CD4-positive, alpha-beta memory T cell (primary cell): ENCODE measurements at regions of chr7 and their contacts with region 1.

Region 1: DNA sequence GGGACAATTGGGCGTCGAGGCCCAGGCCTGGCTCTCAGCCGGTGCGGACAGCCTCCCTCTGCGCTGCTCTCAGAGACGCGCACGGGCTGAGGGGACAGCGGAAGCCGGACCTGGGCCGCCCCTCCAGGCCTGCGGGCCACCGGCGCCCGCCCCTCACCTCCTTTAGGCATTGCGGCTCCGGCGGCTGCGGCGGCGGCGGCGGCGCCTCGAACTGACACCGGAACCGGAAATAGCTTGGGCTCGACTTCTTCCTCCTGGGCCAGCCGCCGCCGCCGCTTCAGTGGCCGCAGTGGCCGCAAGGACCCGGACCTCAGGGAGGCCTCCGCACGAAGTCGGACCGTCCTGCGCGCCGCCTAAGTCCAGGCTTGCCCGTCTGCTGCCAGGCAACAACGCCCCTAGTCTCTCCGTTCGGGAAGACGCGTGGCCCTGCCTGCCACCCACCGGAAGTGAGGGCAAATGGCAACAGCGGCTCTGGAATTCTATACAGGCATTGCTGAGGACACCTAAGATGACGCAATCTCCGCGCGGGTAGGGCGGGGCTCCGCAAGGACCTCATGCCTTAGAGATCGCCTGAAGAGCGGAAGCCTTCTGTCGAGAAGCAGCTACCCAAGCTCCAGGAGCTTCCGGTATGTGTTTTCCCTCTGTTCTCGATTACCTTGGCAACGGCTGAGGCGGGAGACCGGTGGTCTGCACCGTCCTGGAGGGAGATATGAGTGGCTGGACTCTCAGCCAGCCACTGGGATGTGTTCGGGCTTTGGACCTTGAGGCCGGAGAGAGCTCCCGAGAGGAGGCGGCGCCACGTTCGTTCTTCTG is at the starts of genes BUD31 and PDAP1:
- DNase-seq: peak; percentile 96 to 100 (median 98)
- H3K4me3 ChIP-seq: peak within 1 kb of the TSS; percentile 94 to 97
- H3K4me3 Mint-ChIP-seq: peak within 1 kb of the TSS; percentile 94 to 99 (median 96)
- H3K27ac ChIP-seq: peak within 1 kb of the TSS; percentile 93
- H3K27ac Mint-ChIP-seq: peak within 1 kb of the TSS; percentile 88 to 100 (median 98)
- H3K4me1 ChIP-seq: peaks cover 45% of the 10 kb centered on the region
- H3K4me1 Mint-ChIP-seq: peaks cover 29 to 61% (median 48%) of the 10 kb centered on the region in 4 donors
- H3K27me3 ChIP-seq: no peaks in the 10 kb centered on the region
- H3K27me3 Mint-ChIP-seq: no peaks in the 10 kb centered on the region
- total RNA-seq, gene BUD31: 60.0 to 61.3 TPM
- total RNA-seq, gene PDAP1: 66.0 to 67.0 TPM

Region 2: DNA sequence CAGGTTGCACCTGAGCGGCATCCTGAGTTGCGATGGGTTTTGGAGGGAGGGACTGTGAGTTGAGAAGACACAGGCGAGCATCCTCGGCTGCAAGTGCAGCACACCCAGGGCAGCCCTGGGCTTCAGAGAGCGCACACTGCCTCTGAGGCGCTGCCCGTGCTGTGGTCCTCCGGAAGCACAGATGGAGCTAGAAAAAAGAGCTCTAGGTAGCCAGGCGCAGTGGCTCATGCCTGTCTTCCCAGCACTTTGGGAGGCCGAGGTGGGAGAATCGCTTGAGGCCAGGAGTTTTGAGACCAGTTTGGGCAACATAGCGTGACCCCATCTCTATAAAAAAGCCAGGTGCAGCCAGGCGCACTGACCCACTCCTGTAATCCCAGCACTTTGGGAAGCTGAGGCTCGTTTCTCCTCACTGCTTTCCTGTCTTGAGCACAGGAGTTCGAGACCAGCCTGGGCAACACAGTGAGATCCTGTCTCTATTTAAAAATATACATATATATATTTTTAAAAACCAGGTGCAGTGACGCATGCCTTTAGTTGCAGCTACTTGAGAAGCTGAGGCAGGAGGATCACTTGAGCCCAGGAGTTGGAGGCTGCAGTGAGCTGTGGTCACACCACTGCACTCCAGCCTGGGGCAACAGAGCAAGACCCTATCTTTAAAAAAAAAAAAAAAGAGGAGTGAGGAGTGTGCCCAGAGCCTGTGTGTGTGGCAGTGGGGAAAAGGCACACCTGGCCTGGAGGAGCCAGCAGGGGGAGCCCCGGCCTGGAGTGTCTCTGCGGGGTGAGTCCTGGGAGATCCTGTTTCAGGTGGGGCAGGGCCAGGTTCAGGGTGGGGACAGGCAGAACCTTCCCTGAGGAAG is 43.4 kb before region 1 on chr7:
- CTCF ChIA-PET with region 1: interaction called, 38 read pairs
- POLR2A ChIA-PET with region 1: interaction called, 6 read pairs
- intact Hi-C with region 1: loop called (anchors 1 kb)
- DNase-seq: peak; percentile 62 to 70 (median 66)
- H3K4me3 ChIP-seq: no peak overlapping the region
- H3K4me3 Mint-ChIP-seq: no peak overlapping the region
- H3K27ac ChIP-seq: no peak overlapping the region
- H3K27ac Mint-ChIP-seq: peak overlapping the region in 4 of 7 donors; percentile 32 to 89 (median 50)
- H3K4me1 ChIP-seq: no peaks in the 10 kb centered on the region
- H3K4me1 Mint-ChIP-seq: no peaks in the 10 kb centered on the region
- H3K27me3 ChIP-seq: no peaks in the 10 kb centered on the region
- H3K27me3 Mint-ChIP-seq: no peaks in the 10 kb centered on the region

Region 3: GRCh38 chr7:99380032-99380822 is 28.4 kb before region 1 on chr7:
- CTCF ChIA-PET with region 1: interaction called, 6 read pairs
- POLR2A ChIA-PET with region 1: interaction called, 130 read pairs
- intact Hi-C with region 1: loop called (anchors 1 kb)
- DNase-seq: peak; percentile 23 to 62 (median 33)
- H3K4me3 ChIP-seq: peak overlapping the region; percentile 64 to 75
- H3K4me3 Mint-ChIP-seq: peak overlapping the region; percentile 69 to 93 (median 87)
- H3K27ac ChIP-seq: peak overlapping the region; percentile 93
- H3K27ac Mint-ChIP-seq: peak overlapping the region; percentile 93 to 99 (median 98)
- H3K4me1 ChIP-seq: peaks cover 90% of the 10 kb centered on the region
- H3K4me1 Mint-ChIP-seq: peaks cover 32 to 77% (median 55%) of the 10 kb centered on the region in 4 donors
- H3K27me3 ChIP-seq: no peaks in the 10 kb centered on the region
- H3K27me3 Mint-ChIP-seq: no peaks in the 10 kb centered on the region

Region 4: DNA sequence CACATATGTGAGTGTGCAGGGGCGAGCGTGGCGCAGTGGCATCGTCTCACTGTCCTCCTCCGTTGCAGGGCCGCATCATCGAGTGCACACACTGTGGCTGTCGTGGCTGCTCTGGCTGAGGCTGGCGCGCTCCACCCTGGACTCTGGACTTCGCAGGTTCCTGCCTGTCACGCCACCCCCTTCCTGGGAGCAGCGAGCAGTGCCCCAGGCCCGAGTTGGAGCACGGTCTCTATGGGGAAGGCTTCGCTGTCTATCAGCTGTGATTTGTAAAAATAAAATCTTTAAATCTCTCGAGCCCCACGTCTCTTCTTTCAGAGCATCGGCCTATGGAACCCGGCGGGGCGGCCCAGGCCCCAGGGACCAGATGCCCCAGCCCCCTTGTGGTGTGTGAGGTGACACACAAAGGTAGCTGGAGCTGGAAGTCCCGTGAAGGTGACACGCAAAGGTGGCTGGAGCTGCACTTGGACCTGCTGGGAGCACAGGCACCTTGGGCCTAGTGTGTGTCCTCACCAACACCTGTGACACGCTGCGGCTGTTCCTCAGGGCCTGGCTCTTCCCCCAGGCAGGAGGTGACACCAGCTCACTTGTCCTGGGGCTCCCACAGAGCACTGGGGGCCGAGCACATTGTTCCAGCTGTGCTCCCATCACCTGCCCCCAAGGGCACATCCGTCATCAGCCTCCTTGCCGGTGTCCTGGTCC is 10.9 kb after region 1 on chr7:
- CTCF ChIA-PET with region 1: interaction called, 3 read pairs
- POLR2A ChIA-PET with region 1: interaction called, 27 read pairs
- intact Hi-C with region 1: no loop called
- DNase-seq: no peak
- H3K4me3 ChIP-seq: no peak overlapping the region
- H3K4me3 Mint-ChIP-seq: no peak overlapping the region
- H3K27ac ChIP-seq: no peak overlapping the region
- H3K27ac Mint-ChIP-seq: peak overlapping the region in 2 of 7 donors; percentile 72 to 78
- H3K4me1 ChIP-seq: no peaks in the 10 kb centered on the region
- H3K4me1 Mint-ChIP-seq: peaks cover 1 to 13% (median 5%) of the 10 kb centered on the region in 4 donors
- H3K27me3 ChIP-seq: no peaks in the 10 kb centered on the region
- H3K27me3 Mint-ChIP-seq: no peaks in the 10 kb centered on the region

Region 5: DNA sequence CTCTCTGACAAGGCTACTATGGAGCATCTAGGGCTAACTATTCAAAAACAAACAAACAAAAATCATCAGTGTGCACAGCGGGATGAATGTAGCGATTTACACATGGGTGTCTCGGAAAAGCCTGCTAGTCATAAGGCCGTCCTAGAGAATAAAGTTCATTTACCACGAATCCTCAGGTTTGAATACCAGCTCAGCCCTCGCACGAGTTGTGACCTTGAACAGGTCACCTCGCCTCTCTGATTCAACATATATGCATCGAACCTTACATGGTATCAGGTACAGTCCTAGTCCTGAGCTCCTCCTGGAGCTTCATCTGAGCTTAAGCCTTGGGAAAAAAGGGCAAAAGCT is 56.8 kb after region 1 on chr7:
- CTCF ChIA-PET with region 1: interaction called, 3 read pairs
- POLR2A ChIA-PET with region 1: interaction called, 6 read pairs
- intact Hi-C with region 1: loop called (anchors 1 kb)
- DNase-seq: no peak
- H3K4me3 ChIP-seq: peak overlapping the region; percentile 78 to 83
- H3K4me3 Mint-ChIP-seq: peak overlapping the region; percentile 90 to 97 (median 96)
- H3K27ac ChIP-seq: peak overlapping the region; percentile 78
- H3K27ac Mint-ChIP-seq: peak overlapping the region; percentile 79 to 98 (median 95)
- H3K4me1 ChIP-seq: peaks cover 47% of the 10 kb centered on the region
- H3K4me1 Mint-ChIP-seq: peaks cover 19 to 52% (median 30%) of the 10 kb centered on the region in 4 donors
- H3K27me3 ChIP-seq: no peaks in the 10 kb centered on the region
- H3K27me3 Mint-ChIP-seq: no peaks in the 10 kb centered on the region

Region 6: DNA sequence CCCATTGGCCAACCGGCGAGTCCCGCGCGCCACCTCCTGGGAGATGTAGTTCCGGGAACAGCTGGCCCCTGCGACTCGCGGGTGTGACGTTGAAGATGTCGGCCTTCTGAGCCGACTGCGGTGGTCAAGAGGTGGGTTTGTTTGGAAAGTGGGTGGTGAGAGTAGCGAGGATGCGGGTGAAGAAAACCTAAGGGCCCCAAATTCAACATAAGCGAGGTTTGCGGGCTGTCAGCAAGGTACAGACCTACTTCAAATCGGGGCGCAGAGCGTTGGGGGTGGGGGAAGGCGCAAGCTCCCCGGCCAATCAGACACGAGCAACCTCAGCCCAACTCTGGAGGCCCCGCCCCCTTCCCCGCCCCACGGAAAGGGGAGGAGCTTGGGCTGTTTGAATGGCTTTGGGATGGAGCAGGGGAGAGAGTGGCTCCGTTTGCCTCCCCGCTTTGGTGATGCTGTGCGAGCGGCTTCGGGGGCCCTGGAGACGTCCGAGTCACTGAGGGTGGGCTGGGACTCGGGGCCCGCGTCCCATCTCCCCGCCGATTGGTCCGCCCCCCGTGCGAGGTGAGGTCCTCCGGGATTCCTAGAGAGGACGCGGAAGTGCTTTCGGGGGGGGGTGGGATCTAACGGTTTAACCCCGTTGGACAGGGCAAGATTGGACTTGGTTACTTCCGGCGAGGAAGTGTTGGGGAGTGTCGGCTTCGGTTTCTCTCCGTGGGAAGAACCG is 96.2 kb after region 1 on chr7 and contains the start of gene ZKSCAN5:
- CTCF ChIA-PET with region 1: interaction called, 3 read pairs
- POLR2A ChIA-PET with region 1: interaction called, 37 read pairs
- intact Hi-C with region 1: loop called (anchors 1 kb)
- DNase-seq: peak; percentile 97 to 99 (median 97)
- H3K4me3 ChIP-seq: peak within 1 kb of the TSS; percentile 94 to 95
- H3K4me3 Mint-ChIP-seq: peak within 1 kb of the TSS; percentile 93 to 100 (median 99)
- H3K27ac ChIP-seq: peak within 1 kb of the TSS; percentile 86
- H3K27ac Mint-ChIP-seq: peak within 1 kb of the TSS; percentile 89 to 100 (median 99)
- H3K4me1 ChIP-seq: peaks cover 24% of the 10 kb centered on the region
- H3K4me1 Mint-ChIP-seq: peaks cover 18 to 42% (median 29%) of the 10 kb centered on the region in 4 donors
- H3K27me3 ChIP-seq: no peaks in the 10 kb centered on the region
- H3K27me3 Mint-ChIP-seq: no peaks in the 10 kb centered on the region
- total RNA-seq, gene ZKSCAN5: 8.8 to 9.3 TPM

Region 7: DNA sequence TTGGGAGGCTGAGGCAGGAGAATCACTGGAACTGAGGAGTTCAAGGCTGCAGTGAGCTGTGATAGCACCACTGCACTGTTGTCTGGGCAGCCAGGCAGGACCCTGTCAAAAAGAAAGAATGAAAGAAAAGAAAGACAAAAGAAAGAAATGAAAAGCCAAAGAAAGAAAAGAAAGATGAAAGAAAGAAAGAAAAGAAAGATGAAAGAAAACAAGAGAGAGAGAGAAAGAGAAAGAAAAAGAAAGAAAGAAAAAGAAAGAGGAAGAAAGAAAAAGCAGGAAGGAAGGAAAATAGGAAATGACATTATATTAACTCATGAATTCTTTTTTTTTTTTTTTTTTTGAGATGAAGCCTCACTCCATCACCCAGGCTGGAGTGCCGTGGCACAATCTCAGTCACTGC is 866.5 kb after region 1 on chr7:
- CTCF ChIA-PET with region 1: no interaction called
- POLR2A ChIA-PET with region 1: no interaction called
- intact Hi-C with region 1: no loop called
- DNase-seq: no peak
- H3K4me3 ChIP-seq: no peak overlapping the region
- H3K4me3 Mint-ChIP-seq: no peak overlapping the region
- H3K27ac ChIP-seq: no peak overlapping the region
- H3K27ac Mint-ChIP-seq: peak overlapping the region in 1 of 7 donors; percentile 37
- H3K4me1 ChIP-seq: peaks cover 5% of the 10 kb centered on the region
- H3K4me1 Mint-ChIP-seq: peaks cover 5 to 14% (median 7%) of the 10 kb centered on the region in 4 donors
- H3K27me3 ChIP-seq: no peaks in the 10 kb centered on the region
- H3K27me3 Mint-ChIP-seq: no peaks in the 10 kb centered on the region